ENCODE measurements at regions of chr16 and their contacts with region 1.

Region 1: GRCh38 chr16:25051406-25052150 is 36.4 kb upstream of the ARHGAP17 start:
- H3K4me3 Mint-ChIP-seq: no peak overlapping the region
- H3K27ac Mint-ChIP-seq: no peak overlapping the region
- H3K4me1 Mint-ChIP-seq: peaks cover 30% of the 10 kb centered on the region
- H3K27me3 Mint-ChIP-seq: no peaks in the 10 kb centered on the region

Region 2: DNA sequence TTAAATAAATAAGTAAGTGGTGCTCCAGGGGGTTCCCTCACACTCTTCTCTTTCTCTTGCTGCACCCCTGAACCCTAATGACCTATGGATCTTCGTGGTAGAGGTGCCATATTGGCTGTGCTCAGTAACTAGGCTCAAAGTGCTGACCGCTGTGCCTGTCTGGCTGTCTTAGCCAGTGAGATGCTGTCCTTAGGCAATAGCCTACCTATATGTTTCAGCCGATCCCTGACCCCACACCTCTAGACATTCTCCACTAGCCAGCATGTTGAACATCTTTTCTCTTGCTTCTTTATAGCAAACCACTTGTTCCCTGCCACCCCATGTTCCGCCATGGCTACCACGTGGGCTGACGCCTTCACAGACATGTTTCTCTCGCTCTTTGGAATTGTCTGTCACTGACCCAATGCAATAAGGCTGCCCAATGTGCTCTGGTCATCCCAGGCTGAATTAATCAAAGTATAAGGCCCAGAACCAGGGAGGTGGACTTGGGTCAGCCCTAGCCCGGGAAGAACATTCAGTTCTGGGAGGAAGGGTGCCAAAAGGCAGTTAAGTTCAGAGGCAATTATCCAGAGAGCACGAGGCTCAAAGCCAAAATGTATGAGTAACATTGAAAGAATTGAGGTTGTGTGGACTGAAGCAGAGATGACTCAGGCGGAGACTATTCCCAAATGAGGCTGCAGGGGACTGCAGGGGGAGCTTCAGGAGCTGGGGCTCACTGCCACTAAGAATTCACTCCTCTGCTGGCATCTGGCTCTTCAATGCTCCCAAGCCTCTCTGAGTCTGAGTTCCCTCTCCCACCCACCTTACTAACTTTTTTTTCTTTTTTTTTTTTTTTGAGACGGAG is 350.8 kb before region 1 on chr16:
- intact Hi-C with region 1: no loop called
- H3K4me3 Mint-ChIP-seq: no peak overlapping the region
- H3K27ac Mint-ChIP-seq: no peak overlapping the region
- H3K4me1 Mint-ChIP-seq: no peaks in the 10 kb centered on the region
- H3K27me3 Mint-ChIP-seq: peaks cover 11% of the 10 kb centered on the region

Region 3: GRCh38 chr16:24896439-24896838 is 155.1 kb before region 1 on chr16:
- intact Hi-C with region 1: no loop called
- H3K4me3 Mint-ChIP-seq: no peak overlapping the region
- H3K27ac Mint-ChIP-seq: no peak overlapping the region
- H3K4me1 Mint-ChIP-seq: no peaks in the 10 kb centered on the region
- H3K27me3 Mint-ChIP-seq: peaks cover 10% of the 10 kb centered on the region

Region 4: DNA sequence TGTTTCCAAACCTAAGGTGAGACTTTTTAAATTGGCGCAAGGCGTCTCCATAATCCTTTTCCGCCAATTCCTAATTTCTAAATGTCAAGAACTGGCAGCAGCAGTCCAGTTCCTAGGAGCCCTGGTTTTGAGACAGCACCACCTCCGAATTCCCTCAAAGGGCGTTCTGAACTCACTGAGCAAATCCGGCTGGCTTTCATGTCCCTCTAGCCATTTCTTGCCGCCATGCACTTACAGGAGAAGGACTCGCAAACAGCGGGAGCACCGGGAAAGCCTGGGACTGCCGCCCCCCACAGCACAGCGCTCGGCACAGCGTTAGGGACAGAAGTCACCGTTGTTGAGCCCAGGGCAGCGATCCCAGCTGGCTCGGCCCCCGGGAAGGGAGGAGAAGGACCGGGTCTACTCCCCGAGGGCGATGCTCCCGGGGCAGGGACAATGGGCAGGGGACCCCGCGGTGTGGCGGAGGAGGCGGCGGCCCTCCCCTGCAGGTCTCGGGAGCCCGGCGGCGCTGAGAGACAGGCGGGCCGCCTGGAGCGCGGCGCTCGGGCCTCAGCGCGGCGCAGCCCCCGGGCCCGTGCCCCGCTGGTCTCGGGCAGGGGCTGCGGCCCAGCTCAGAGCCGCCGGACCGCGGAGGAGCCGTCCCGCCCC is 37.0 kb before region 1 on chr16:
- intact Hi-C with region 1: loop called (anchors 2 kb)
- H3K4me3 Mint-ChIP-seq: peak overlapping the region; percentile 97
- H3K27ac Mint-ChIP-seq: peak overlapping the region; percentile 93
- H3K4me1 Mint-ChIP-seq: peaks cover 81% of the 10 kb centered on the region
- H3K27me3 Mint-ChIP-seq: peaks cover 15% of the 10 kb centered on the region

Region 5: DNA sequence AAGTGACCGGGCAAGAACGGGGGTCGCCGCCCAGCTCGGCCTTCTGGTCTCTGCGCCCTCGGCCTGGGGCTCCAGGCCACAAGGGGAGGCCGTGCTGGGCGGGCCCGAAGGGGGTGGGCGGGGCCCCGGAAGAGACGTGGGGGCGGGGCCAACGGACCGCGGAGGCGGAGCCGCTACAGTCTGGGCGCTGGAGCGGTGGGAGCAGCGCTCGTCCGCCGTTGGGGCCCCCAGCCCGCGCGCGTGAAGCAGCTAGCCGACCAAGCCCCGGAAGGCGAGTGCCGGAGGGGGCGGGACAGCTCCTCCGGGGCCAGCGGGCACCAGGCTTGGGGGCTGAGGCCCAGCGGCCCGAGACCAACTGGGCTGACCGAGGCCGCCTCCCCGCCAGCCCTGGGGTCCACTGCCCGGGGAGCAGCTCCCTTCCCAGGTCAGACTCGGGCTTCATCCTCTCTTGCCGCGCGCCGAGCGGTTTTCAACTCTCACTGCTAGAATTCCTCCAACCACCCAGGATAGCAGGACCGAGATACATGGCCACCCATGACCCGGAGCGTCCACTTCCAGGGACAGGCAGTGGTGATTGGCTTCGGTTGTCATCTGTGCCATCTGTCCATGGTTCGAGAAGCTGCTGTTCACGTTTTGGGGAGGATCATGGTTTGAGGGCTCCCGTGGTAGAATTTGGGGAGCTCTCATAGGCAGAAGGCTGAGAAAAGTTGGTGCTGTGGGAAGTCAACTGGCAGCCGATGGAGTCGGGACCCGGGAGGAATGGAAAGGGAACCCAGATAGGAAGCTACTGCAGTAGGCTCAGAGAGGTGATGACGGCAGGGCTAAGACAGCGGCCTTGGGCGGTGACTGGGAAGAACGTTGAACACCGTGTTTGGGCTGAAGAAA is 15.4 kb after region 1 on chr16:
- intact Hi-C with region 1: loop called (anchors 2 kb)
- H3K4me3 Mint-ChIP-seq: peak overlapping the region; percentile 85
- H3K27ac Mint-ChIP-seq: peak overlapping the region; percentile 83
- H3K4me1 Mint-ChIP-seq: peaks cover 43% of the 10 kb centered on the region
- H3K27me3 Mint-ChIP-seq: no peaks in the 10 kb centered on the region

Region 6: GRCh38 chr16:25126820-25127232 is 75.2 kb after region 1 on chr16:
- intact Hi-C with region 1: loop called (anchors 1 kb)
- H3K4me3 Mint-ChIP-seq: no peak overlapping the region
- H3K27ac Mint-ChIP-seq: no peak overlapping the region
- H3K4me1 Mint-ChIP-seq: peaks cover 32% of the 10 kb centered on the region
- H3K27me3 Mint-ChIP-seq: no peaks in the 10 kb centered on the region

Region 7: DNA sequence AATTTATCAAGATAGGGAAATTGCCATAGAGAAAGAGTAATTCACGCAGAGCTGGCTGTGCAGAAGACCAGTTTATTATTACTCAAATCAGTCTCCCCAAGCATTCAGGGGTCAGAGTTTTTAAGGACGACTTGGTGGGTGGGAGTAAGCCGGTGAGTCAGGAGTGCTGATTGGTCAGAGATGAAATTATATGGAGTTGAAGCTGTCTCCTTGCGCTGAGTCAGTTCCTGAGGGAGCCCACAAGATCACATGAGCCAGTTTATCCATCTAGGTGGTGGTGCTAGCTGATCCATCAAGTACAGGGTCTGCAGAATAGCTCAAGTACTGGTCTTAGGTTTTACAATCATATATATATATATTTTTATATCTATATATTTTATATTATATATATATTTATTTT is 159.2 kb after region 1 on chr16:
- intact Hi-C with region 1: no loop called
- H3K4me3 Mint-ChIP-seq: no peak overlapping the region
- H3K27ac Mint-ChIP-seq: no peak overlapping the region
- H3K4me1 Mint-ChIP-seq: no peaks in the 10 kb centered on the region
- H3K27me3 Mint-ChIP-seq: no peaks in the 10 kb centered on the region

Region 8: DNA sequence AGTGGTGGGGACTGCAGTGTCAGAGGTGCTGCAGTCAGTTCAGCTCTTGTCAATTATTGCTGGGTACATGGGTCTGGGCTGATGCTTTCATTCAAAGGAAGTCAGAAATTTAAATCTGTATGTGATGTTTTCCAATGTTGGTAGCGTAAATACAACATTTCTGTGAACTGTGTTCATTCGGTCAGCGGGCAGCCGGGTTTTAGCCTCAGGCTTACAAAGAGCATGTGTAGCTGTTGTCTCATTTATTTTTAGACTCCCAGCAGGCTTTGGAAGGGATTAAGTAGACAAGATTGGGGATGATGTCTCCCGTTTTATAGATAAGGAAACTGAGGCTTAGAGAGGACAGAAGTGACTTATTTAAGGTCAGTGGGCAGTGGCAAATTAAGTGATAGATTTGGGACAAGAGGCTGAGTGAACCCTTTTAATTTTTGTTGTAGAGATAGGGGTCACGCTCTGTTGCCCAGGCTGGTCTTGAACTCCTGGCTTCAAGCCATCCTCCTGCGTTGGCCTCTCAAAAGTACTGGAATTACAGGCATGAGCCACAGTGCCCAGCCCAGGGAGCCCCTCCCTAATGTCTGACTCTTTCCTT is 173.2 kb after region 1 on chr16:
- intact Hi-C with region 1: loop called (anchors 2 kb)
- H3K4me3 Mint-ChIP-seq: no peak overlapping the region
- H3K27ac Mint-ChIP-seq: no peak overlapping the region
- H3K4me1 Mint-ChIP-seq: no peaks in the 10 kb centered on the region
- H3K27me3 Mint-ChIP-seq: no peaks in the 10 kb centered on the region

Measured in dendritic cell treated with granulocyte-macrophage colony-stimulating factor and Interleukin-4, amounts not matched to agents 40 ng/mL and 50 ng/mL, for 4 days (primary cell).